ENCODE measurements at regions of chr10 and their contacts with region 1.

Region 1: DNA sequence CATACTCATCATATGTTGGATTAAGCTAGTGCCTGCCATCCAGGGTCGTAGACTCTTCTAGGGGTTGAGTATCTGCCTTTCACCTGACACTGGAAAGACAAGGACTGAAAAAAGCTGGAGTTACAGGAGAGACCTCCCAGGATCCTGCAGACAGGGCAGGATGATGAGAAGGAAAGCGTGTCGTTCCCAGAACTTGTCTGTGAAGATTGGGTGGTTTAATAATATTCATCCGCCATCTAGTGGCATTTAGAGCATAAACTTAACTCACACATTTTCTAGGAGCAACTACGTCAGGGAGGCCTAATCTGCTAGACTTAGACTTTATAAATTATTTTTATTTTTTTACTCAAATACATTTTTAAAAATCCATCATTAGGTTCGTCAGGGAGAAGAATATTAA is 59.6 kb downstream of the ADRB1 start:
- DNase-seq: no peak
- H3K4me3 Mint-ChIP-seq: no peak overlapping the region
- H3K27ac Mint-ChIP-seq: no peak overlapping the region
- H3K4me1 Mint-ChIP-seq: peaks cover 10% of the 10 kb centered on the region
- H3K27me3 Mint-ChIP-seq: peaks cover 18% of the 10 kb centered on the region
- CTCF ChIP-seq: peak; percentile 28

Region 2: GRCh38 chr10:113704637-113705343 is 398.5 kb before region 1 on chr10:
- CTCF ChIA-PET with region 1: no interaction called
- intact Hi-C with region 1: loop called (anchors 2 kb)
- DNase-seq: peak; percentile 32
- H3K4me3 Mint-ChIP-seq: no peak overlapping the region
- H3K27ac Mint-ChIP-seq: no peak overlapping the region
- H3K4me1 Mint-ChIP-seq: no peaks in the 10 kb centered on the region
- H3K27me3 Mint-ChIP-seq: no peaks in the 10 kb centered on the region
- CTCF ChIP-seq: peak; percentile 24

Region 3: GRCh38 chr10:113802997-113803396 is 300.3 kb before region 1 on chr10:
- CTCF ChIA-PET with region 1: interaction called, 3 read pairs
- intact Hi-C with region 1: loop called (anchors 1 kb)
- DNase-seq: no peak
- H3K4me3 Mint-ChIP-seq: no peak overlapping the region
- H3K27ac Mint-ChIP-seq: no peak overlapping the region
- H3K4me1 Mint-ChIP-seq: no peaks in the 10 kb centered on the region
- H3K27me3 Mint-ChIP-seq: peaks cover 2% of the 10 kb centered on the region
- CTCF ChIP-seq: no peak

Region 4: GRCh38 chr10:113854011-113854760 is 249.1 kb before region 1 on chr10 and contains the starts of genes DCLRE1A and NHLRC2:
- CTCF ChIA-PET with region 1: no interaction called
- intact Hi-C with region 1: loop called (anchors 5 kb)
- DNase-seq: peak; percentile 61
- H3K4me3 Mint-ChIP-seq: peak within 1 kb of the TSS; percentile 90
- H3K27ac Mint-ChIP-seq: peak within 1 kb of the TSS; percentile 87
- H3K4me1 Mint-ChIP-seq: peaks cover 2% of the 10 kb centered on the region
- H3K27me3 Mint-ChIP-seq: no peaks in the 10 kb centered on the region
- CTCF ChIP-seq: no peak
- total RNA-seq, gene DCLRE1A: 7.4 and 7.9 TPM in 2 replicates
- total RNA-seq, gene NHLRC2: 18.7 and 20.2 TPM in 2 replicates

Region 5: DNA sequence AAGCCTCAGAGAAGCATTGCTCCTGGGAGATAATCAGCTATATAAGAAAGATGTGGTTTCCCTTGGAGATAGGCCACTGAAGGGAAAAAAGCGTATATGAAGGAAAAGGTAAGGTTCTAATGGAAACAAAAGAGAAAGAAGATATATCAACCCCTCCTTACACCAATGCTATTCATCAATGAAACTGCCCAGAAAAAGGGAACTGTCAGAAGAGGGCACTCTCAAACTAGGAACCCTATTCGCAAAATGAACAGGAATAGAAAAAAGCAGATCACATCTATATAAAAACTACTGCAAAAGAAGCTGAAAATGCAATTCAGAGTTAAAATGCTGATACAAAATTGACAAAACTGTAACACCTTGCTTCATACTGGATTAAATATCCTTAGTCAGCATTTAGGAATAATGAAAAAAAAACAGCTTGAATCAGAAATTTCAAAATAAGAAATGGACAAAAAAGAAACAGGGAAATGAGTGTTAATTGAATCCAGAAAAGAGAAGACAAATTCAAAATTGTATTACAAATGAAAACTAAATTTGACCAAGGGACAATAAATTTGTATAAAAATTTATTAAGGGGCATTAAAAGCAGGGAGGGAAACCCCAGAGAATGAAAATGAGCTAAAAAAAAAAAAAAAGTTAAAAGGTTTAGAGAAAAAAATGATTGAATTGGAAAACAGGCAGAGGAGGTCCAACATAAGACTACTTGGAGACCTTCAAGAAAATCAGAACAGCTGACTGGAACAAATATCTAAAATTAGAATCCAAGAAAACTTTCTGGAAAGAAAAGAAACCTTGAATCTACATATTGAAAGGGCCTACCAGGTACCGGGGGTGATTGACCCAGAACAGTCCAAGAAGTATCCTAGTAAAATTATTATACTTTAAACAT is 230.9 kb before region 1 on chr10:
- CTCF ChIA-PET with region 1: interaction called, 4 read pairs
- intact Hi-C with region 1: loop called (anchors 5 kb)
- DNase-seq: no peak
- H3K4me3 Mint-ChIP-seq: no peak overlapping the region
- H3K27ac Mint-ChIP-seq: no peak overlapping the region
- H3K4me1 Mint-ChIP-seq: peaks cover 10% of the 10 kb centered on the region
- H3K27me3 Mint-ChIP-seq: no peaks in the 10 kb centered on the region
- CTCF ChIP-seq: no peak

Region 6: GRCh38 chr10:113970641-113971040 is 132.6 kb before region 1 on chr10:
- CTCF ChIA-PET with region 1: no interaction called
- intact Hi-C with region 1: no loop called
- DNase-seq: no peak
- H3K4me3 Mint-ChIP-seq: no peak overlapping the region
- H3K27ac Mint-ChIP-seq: no peak overlapping the region
- H3K4me1 Mint-ChIP-seq: no peaks in the 10 kb centered on the region
- H3K27me3 Mint-ChIP-seq: no peaks in the 10 kb centered on the region
- CTCF ChIP-seq: no peak

Measured in Calu3 (cell line).